ENCODE measurements at regions of chr18 and their contacts with region 1.

Region 1: DNA sequence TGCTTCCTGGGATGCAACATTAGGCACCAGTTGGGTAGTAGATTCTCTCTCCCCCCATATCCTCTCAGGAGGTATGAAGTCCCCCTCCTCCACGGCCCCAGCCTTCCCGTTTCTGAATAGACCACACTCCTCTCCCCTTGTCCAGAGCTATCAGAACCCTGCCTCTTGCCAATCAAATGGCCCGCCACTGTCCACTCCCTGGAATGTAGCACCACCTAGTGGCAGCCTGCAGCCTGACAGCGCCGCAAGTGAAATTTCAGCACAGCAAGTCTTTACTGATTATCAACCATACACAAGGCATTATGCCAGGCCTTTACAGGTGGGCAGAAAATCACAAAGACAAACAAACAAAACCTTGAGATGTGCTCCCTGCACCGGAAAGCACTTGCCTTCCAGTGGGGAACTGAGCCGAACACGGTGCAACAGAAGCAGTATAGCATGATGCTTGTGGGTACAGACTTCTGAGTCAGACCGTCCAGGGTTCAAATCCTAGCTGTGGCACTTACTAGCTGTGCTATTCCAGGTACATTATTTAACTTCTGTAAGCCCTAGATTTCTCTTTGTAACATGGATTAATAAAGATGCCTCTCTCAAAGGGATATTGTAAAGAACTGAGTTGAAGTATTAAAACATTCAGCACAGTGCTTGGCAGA is 174.0 kb downstream of the SMAD2 start:
- DNase-seq: peak in 13 of 14 experiments; percentile 15 to 64 (median 31)
- ATAC-seq: no peak
- H3K4me3 ChIP-seq: no peak overlapping the region
- H3K4me3 Mint-ChIP-seq: no peak overlapping the region
- H3K27ac ChIP-seq: no peak overlapping the region
- H3K27ac Mint-ChIP-seq: no peak overlapping the region
- H3K4me1 ChIP-seq: peaks cover 6% of the 10 kb centered on the region
- H3K4me1 Mint-ChIP-seq: no peaks in the 10 kb centered on the region
- H3K27me3 ChIP-seq: peaks cover 6 to 14% of the 10 kb centered on the region in 2 experiments
- H3K27me3 Mint-ChIP-seq: peaks cover 52% of the 10 kb centered on the region
- CTCF ChIP-seq: peak; percentile 72

Region 2: GRCh38 chr18:47815486-47816280 is 59.2 kb after region 1 on chr18:
- CTCF ChIA-PET with region 1: no interaction called
- POLR2A ChIA-PET with region 1: no interaction called
- intact Hi-C with region 1: loop called in 1 of 2 experiments (anchors 10 kb)
- DNase-seq: no peak
- ATAC-seq: no peak
- H3K4me3 ChIP-seq: no peak overlapping the region
- H3K4me3 Mint-ChIP-seq: no peak overlapping the region
- H3K27ac ChIP-seq: no peak overlapping the region
- H3K27ac Mint-ChIP-seq: no peak overlapping the region
- H3K4me1 ChIP-seq: no peaks in the 10 kb centered on the region
- H3K4me1 Mint-ChIP-seq: no peaks in the 10 kb centered on the region
- H3K27me3 ChIP-seq: no peaks in the 10 kb centered on the region
- H3K27me3 Mint-ChIP-seq: no peaks in the 10 kb centered on the region
- CTCF ChIP-seq: no peak

Region 3: DNA sequence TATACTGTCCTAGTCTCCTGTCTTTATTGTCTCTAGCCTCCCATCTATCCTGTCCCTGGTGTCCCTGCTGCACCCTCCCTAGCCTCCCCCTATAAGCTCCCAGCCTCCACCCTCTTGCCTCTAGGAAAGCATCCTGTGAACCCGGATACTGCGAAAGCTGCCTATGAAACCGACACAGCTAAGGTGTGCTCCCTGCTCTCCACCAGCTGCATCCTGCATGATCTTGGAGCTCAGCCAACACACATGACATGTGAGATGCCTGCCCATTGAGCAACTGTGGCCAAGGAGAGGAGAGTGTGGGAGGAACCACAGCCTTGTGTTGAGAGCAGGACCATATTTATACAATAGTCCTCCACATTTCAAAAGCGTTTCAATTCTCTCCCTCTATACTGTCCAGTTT is 465.6 kb after region 1 on chr18:
- CTCF ChIA-PET with region 1: no interaction called
- POLR2A ChIA-PET with region 1: no interaction called
- intact Hi-C with region 1: no loop called
- DNase-seq: peak in 4 of 14 experiments; percentile 27 to 48 (median 36)
- ATAC-seq: no peak
- H3K4me3 ChIP-seq: no peak overlapping the region
- H3K4me3 Mint-ChIP-seq: no peak overlapping the region
- H3K27ac ChIP-seq: no peak overlapping the region
- H3K27ac Mint-ChIP-seq: no peak overlapping the region
- H3K4me1 ChIP-seq: peaks cover 18% of the 10 kb centered on the region
- H3K4me1 Mint-ChIP-seq: no peaks in the 10 kb centered on the region
- H3K27me3 ChIP-seq: peaks cover 0 to 4% of the 10 kb centered on the region in 2 experiments
- H3K27me3 Mint-ChIP-seq: no peaks in the 10 kb centered on the region
- CTCF ChIP-seq: no peak